ENCODE measurements at regions of chr17 and their contacts with region 1.

Region 1: GRCh38 chr17:27601069-27601975 is 29.7 kb upstream of the LGALS9 start:
- DNase-seq: peak; percentile 87
- H3K4me3 ChIP-seq: no peak overlapping the region
- H3K27ac ChIP-seq: no peak overlapping the region
- H3K4me1 ChIP-seq: peaks cover 0 to 19% (median 11%) of the 10 kb centered on the region in 4 donors
- H3K27me3 ChIP-seq: no peaks in the 10 kb centered on the region
- CTCF ChIP-seq: peak; percentile 92 to 96 (median 93)
- EP300 ChIP-seq: no peak
- POLR2A ChIP-seq: no peak

Region 2: GRCh38 chr17:27245230-27245696 is 356.1 kb before region 1 on chr17:
- in situ Hi-C with region 1: loop called in 1 of 4 experiments (anchors 25 kb)
- intact Hi-C with region 1: no loop called
- DNase-seq: peak; percentile 85
- H3K4me3 ChIP-seq: no peak overlapping the region
- H3K27ac ChIP-seq: peak overlapping the region; percentile 80 to 84 (median 82)
- H3K4me1 ChIP-seq: peaks cover 23 to 67% (median 29%) of the 10 kb centered on the region in 4 donors
- H3K27me3 ChIP-seq: no peaks in the 10 kb centered on the region
- CTCF ChIP-seq: peak; percentile 57 to 86 (median 63)
- EP300 ChIP-seq: no peak
- POLR2A ChIP-seq: no peak

Region 3: DNA sequence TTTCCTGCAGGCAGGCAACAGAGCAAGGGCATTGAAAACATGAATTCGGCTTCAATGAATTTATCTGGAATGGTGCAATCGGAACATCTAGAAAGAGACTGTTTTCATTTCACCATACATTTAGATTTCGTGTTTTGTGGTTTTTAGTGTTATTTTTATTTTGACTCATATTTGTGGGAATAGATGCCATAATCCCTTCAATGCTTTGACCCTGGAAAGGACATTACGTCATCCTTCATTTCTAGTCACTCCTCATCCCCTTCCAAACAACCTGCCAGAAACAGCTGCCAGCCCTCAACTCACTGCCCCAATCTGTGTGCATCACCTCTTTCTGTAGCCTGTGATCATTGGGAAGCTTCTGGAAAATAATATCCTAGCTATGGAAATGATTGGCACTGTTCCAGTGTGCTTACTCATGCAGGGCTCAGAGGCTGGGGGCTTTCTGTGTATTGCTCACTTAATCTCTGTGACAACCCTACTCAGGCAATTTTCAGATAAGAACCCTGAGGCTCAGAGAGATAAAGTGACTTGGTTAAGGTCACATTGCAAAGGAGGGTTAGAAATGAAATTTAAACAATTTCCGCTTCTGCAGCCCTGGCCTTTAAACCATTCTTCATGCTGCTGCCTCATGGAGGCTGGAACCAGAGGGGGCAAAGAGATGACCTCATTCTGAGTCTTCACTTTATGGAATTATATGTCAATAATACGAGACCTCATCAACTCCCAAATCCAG is 154.6 kb before region 1 on chr17:
- in situ Hi-C with region 1: loop called in 2 of 4 experiments (anchors 10 to 25 kb)
- intact Hi-C with region 1: no loop called
- DNase-seq: no peak
- H3K4me3 ChIP-seq: no peak overlapping the region
- H3K27ac ChIP-seq: no peak overlapping the region
- H3K4me1 ChIP-seq: no peaks in the 10 kb centered on the region
- H3K27me3 ChIP-seq: no peaks in the 10 kb centered on the region
- CTCF ChIP-seq: no peak
- EP300 ChIP-seq: no peak
- POLR2A ChIP-seq: no peak

Region 4: DNA sequence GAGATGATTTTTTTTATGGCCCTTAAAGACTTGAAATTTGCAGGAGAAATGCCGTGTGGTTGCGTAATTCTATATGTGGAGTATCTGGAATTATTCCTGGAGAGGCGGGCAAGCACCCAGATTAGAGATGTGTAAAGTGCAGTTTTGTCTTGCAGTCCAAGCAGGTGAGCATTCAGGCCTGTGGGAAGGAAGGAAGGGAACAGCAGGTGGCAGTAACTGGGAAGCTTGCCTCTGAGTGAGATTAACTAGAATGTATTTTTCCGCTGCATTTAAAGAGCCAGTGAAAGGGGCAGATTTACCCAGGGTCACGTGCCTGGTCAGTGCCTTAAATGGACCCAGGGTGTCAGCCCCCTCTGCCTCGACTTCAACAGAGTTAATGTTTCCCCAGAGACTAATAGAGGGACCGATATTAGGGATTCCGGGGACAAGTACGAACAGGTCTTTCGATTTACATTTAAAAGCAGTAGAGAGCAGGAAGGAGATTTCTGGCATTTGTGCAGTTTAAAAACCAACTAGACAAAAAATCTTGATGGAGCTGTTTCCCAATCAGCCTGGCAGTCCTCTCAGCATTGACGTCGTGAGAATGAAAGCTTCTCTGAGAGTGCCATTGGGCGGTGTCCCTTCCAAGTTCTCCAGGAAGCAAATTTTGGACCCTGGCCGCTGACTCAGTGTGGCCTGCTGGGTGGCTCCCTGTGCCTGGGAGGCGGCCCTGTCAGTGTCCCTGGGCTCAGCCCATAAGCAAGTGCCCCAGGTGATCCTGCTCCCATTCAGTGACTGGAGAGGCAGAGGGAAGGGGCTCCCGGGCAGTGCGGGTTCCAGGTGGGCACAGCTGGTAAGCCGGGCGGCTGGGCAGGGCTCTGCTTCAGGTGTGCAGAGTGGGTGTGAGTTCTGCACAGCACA is 106.9 kb before region 1 on chr17:
- in situ Hi-C with region 1: loop called in 2 of 4 experiments (anchors 10 to 25 kb)
- intact Hi-C with region 1: no loop called
- DNase-seq: peak; percentile 92
- H3K4me3 ChIP-seq: peak overlapping the region in 3 of 4 donors; percentile 13 to 41 (median 24)
- H3K27ac ChIP-seq: peak overlapping the region; percentile 69 to 83 (median 80)
- H3K4me1 ChIP-seq: peaks cover 17 to 36% (median 26%) of the 10 kb centered on the region in 4 donors
- H3K27me3 ChIP-seq: no peaks in the 10 kb centered on the region
- CTCF ChIP-seq: peak; percentile 35 to 75 (median 53)
- EP300 ChIP-seq: no peak
- POLR2A ChIP-seq: peak; percentile 68

Region 5: DNA sequence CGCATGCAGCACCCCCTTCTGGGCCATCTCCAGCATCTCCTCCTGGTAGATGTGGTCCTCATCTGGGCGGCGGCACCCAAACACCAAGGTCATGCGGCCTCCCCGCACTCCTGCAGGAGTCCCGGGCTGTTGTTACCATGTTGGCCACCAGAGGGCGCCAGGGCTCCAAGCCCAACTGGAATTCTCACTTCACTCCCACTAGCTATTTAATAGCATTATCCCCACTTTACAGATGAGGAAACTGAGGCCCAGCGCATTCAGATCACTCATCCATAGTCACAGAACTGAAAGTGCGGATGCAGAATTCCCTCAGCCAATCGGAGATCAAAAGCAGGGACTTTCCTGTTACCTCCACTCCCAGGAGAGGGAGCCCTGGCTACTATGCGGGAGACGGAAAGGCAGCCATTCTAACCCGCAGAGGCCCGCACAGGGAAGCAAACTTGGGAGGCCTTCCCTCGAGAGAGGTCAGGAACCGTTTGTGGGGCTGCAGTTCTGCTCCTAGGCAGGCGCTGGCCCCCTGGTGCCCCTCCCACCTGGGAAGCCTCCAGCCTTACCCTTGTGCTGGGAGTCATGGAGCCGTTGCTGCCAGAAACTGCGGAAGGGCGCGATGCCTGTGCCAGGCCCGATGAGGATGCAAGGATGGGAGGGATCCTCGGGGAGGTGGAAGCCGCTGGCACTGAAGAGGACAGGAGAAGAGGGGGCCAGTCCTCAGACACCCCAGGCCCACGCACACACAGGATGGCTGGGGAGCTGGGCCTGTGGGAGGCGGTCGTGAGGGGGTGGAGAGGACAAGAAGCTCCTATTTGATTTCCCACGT is 159.0 kb after region 1 on chr17:
- in situ Hi-C with region 1: loop called in 1 of 4 experiments (anchors 10 kb)
- intact Hi-C with region 1: no loop called
- DNase-seq: peak; percentile 69
- H3K4me3 ChIP-seq: no peak overlapping the region
- H3K27ac ChIP-seq: no peak overlapping the region
- H3K4me1 ChIP-seq: no peaks in the 10 kb centered on the region
- H3K27me3 ChIP-seq: no peaks in the 10 kb centered on the region
- CTCF ChIP-seq: peak; percentile 83 to 94 (median 90)
- EP300 ChIP-seq: no peak
- POLR2A ChIP-seq: no peak